Activated B cell treated with CpG ODN at 0.5 μM for 24 hours (primary cell): ENCODE measurements at regions of chr2 and their contacts with region 1.

Region 1: GRCh38 chr2:98649135-98649991 is 41.0 kb downstream of the UNC50 start:
- DNase-seq: peak; percentile 46
- ATAC-seq: peak; percentile 99
- H3K4me3 Mint-ChIP-seq: no peak overlapping the region
- H3K27ac Mint-ChIP-seq: peak overlapping the region; percentile 18
- H3K4me1 Mint-ChIP-seq: peaks cover 19% of the 10 kb centered on the region
- H3K27me3 Mint-ChIP-seq: no peaks in the 10 kb centered on the region
- CTCF ChIP-seq: peak; percentile 99

Region 2: DNA sequence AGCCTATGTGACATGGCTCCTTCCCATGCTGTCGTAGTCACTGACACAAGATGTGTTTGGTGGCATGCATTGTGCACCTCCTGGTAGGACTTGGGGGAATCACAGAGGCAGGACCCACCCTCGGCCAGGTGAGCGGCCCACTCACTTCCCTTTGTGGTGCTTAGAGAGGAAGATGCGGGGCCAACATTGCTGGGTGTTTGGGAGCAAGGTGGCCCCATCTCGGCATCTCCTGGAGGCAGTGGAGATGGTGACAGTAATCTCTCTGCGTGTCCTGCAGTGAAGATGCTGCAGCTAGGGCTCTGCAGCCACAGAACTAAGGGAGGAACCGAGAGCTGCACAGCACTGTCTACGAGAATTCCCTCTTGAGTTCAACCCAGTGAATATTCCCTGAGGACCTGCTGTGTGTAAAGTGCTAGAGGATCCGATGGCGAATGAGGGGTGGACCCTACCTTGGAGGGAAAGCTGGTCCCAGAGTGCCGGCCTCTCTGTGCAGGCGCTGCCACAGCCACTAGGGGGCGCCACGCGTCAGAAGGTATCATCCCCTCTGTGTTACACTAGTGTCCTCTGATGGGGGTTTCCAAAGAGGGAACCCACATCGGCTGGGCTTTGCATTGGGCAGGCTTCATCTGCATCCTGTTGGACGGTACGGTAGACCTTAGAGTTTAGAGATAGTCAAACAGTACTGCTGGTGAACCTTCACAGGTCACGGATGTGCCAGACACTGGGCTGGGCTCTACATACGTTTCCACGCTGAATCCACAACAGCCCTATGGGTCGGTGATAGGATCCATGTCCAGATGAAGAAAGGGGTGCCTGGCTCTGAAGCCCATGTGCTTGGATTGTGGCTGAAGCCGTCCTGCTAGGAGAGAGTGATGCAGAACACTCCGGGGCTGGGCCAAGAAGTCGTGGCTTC is 80.2 kb before region 1 on chr2:
- CTCF ChIA-PET with region 1: no interaction called
- POLR2A ChIA-PET with region 1: no interaction called
- intact Hi-C with region 1: loop called (anchors 1 kb)
- DNase-seq: peak; percentile 57
- ATAC-seq: peak; percentile 82
- H3K4me3 Mint-ChIP-seq: no peak overlapping the region
- H3K27ac Mint-ChIP-seq: no peak overlapping the region
- H3K4me1 Mint-ChIP-seq: no peaks in the 10 kb centered on the region
- H3K27me3 Mint-ChIP-seq: no peaks in the 10 kb centered on the region
- CTCF ChIP-seq: no peak

Region 3: GRCh38 chr2:98835831-98836385 is 186.5 kb after region 1 on chr2:
- CTCF ChIA-PET with region 1: interaction called, 64 read pairs
- POLR2A ChIA-PET with region 1: interaction called, 5 read pairs
- intact Hi-C with region 1: loop called (anchors 1 kb)
- DNase-seq: no peak
- ATAC-seq: peak; percentile 18
- H3K4me3 Mint-ChIP-seq: no peak overlapping the region
- H3K27ac Mint-ChIP-seq: no peak overlapping the region
- H3K4me1 Mint-ChIP-seq: peaks cover 6% of the 10 kb centered on the region
- H3K27me3 Mint-ChIP-seq: no peaks in the 10 kb centered on the region
- CTCF ChIP-seq: no peak

Region 4: GRCh38 chr2:99066075-99066958 is 417.0 kb after region 1 on chr2:
- CTCF ChIA-PET with region 1: interaction called, 24 read pairs
- POLR2A ChIA-PET with region 1: no interaction called
- intact Hi-C with region 1: loop called (anchors 1 kb)
- DNase-seq: no peak
- ATAC-seq: peak; percentile 85
- H3K4me3 Mint-ChIP-seq: no peak overlapping the region
- H3K27ac Mint-ChIP-seq: no peak overlapping the region
- H3K4me1 Mint-ChIP-seq: no peaks in the 10 kb centered on the region
- H3K27me3 Mint-ChIP-seq: no peaks in the 10 kb centered on the region
- CTCF ChIP-seq: no peak